GM18951 (cell line): ENCODE measurements at regions of chr11 and their contacts with region 1.

Region 1: DNA sequence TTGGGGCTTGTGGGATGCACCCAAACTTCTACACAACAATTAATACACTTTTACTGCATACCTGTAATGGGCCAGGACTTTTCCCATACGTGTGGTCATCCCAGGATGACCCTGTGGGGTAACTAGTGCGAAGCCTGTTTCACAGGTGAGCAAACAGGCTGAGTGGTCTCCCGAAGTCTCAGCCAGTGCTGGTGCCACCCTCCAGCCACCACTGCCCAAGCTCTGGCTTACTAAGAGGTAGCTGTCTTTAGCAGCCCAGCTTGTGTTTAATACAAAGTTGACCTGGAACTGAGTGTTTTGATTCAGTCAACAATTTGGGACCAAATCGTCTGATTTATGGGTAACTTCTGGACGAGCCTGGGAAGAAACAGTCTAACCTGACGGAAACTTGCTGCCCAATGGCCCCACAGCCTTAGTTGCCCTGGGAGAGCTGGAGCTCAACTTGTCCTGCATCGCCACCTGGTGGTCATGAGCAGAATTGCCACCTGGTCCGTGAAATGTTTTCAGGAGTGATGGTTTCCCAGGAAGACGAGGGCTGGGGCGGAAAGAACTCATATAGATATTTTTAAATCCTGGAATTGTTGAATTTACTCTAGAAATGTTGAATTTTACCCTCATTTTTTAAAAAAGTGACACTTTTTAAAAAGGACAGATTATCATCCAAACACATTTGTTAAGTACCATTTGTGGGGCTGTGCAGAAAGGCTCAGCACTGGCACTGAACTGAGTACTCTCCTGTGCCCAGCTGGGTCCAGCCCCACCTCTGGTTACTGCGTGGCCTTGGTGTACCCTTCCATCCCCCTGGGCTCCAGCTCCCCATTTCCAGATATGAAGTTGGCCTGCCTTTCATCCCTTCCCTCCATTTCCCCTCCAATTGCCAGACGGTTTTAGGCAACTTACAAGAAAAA is 95.5 kb upstream of the PARVA start:
- POLR2A ChIP-seq: no peak

Region 2: DNA sequence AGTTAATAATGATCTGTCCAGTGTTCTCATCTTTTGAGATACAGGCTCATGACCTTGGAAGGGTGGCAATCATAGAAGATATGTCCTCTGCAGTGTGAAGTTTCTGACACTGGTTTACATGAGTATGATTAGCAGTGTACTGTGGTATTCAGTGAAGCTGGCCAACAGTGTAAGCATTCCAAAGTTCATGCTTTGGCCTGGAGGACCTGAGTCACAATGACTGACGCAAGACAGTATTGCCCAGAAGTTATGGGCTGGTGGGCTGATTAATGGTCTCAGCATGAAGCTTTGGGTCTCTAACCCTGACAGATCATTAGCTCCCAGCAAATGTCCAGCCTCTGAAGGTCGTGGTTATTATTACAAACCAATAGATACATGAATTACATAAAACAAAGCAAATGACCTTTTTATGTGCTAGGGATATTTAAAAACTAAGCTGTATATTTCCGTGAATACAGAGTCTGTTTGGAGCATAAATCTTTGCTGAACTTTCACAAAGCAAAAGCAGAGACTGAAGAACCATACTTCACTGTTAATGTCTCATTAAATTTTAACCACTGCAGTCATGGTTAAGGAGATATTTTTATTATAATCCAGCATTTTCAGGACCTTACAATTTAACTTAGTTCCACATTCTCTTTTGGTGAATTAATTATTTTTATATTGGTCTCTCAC is 468.4 kb before region 1 on chr11:
- in situ Hi-C with region 1: loop called (anchors 25 kb)
- POLR2A ChIP-seq: no peak

Region 3: DNA sequence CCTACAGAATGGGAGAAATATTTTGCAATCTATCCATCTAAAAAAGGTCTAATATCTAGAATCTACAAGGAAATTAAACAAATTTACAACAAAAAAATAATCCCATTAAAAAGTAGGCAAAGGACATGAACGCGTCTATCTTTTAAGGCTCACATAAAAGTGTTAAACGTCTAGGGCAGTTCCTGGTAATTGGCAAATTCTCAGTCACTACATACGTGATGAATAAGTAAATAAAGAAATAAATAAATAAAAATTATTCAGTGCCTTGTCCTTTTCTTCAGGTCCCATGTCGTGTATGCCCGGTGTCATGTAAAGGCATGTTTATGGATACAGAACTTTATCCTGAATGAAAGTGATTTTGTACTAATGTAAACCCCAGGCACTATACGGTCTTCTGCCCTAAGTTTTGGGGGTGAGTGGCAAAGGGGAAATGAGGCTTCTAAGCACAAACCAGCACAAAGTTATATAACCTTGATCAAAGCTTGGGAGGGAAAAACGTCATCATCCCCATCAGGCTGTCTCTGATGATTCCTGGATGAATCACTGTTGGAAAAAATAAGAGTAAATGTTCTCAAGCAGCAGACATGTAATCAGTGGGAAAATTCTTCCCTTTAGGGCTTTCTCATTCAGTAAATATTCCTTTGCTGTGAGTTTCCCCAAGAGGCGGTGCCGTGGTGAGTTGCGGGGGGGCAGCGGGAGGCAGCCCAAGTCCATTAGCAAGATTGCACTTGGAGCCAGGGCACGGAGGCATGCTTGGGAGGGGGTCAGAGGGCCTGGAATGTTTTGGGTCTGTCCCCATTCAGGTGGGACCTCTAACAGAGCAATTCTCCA is 201.9 kb before region 1 on chr11:
- in situ Hi-C with region 1: no loop called
- POLR2A ChIP-seq: no peak

Region 4: DNA sequence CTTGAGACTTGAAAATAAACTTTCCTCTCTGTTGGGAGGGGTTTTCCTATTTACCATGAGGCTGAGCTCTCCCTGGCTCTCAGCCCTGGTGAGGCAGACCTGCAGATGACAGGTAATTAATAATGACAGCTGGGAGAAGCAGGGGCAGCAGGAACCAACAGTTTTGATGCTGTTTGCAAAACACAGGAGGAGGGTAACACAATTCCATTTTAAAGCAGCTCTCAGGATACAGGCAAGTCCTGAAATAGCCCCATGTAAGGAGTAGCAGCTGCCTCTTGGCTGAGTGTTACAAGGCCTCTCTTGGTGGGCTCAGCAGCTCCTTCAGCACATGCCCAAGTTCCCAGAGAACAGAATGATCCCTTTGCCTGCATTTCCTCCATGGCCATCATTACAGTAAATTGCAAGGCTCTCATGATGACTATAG is 108.9 kb after region 1 on chr11:
- in situ Hi-C with region 1: no loop called
- POLR2A ChIP-seq: no peak